ENCODE measurements at regions of chr6 and their contacts with region 1.

Region 1: GRCh38 chr6:125790358-125791150 is at the start of gene NCOA7:
- DNase-seq: peak; percentile 60 to 85 (median 76)
- ATAC-seq: peak; percentile 84 to 89 (median 86)
- H3K4me3 ChIP-seq: peak within 1 kb of the TSS; percentile 83 to 85
- H3K4me3 Mint-ChIP-seq: peak within 1 kb of the TSS; percentile 90 to 95 (median 93)
- H3K27ac ChIP-seq: peak within 1 kb of the TSS; percentile 93
- H3K27ac Mint-ChIP-seq: peak within 1 kb of the TSS; percentile 99
- H3K4me1 ChIP-seq: peaks cover 15 to 21% of the 10 kb centered on the region in 2 experiments
- H3K4me1 Mint-ChIP-seq: peaks cover 56 to 59% (median 58%) of the 10 kb centered on the region in 3 donors
- H3K27me3 ChIP-seq: no peaks in the 10 kb centered on the region
- H3K27me3 Mint-ChIP-seq: no peaks in the 10 kb centered on the region
- total RNA-seq, gene NCOA7: 40.3 to 51.6 (median 46.4) TPM

Region 2: GRCh38 chr6:125678601-125679000 is 112.0 kb before region 1 on chr6:
- CTCF ChIA-PET with region 1: no interaction called
- POLR2A ChIA-PET with region 1: no interaction called
- DNase-seq: no peak
- ATAC-seq: no peak
- H3K4me3 ChIP-seq: no peak overlapping the region
- H3K4me3 Mint-ChIP-seq: no peak overlapping the region
- H3K27ac ChIP-seq: no peak overlapping the region
- H3K27ac Mint-ChIP-seq: no peak overlapping the region
- H3K4me1 ChIP-seq: peaks cover 0 to 11% of the 10 kb centered on the region in 2 experiments
- H3K4me1 Mint-ChIP-seq: peaks cover 8 to 10% (median 9%) of the 10 kb centered on the region in 3 donors
- H3K27me3 ChIP-seq: peaks cover 0 to 3% of the 10 kb centered on the region in 2 experiments
- H3K27me3 Mint-ChIP-seq: peaks cover 28 to 36% of the 10 kb centered on the region in 2 donors

Region 3: DNA sequence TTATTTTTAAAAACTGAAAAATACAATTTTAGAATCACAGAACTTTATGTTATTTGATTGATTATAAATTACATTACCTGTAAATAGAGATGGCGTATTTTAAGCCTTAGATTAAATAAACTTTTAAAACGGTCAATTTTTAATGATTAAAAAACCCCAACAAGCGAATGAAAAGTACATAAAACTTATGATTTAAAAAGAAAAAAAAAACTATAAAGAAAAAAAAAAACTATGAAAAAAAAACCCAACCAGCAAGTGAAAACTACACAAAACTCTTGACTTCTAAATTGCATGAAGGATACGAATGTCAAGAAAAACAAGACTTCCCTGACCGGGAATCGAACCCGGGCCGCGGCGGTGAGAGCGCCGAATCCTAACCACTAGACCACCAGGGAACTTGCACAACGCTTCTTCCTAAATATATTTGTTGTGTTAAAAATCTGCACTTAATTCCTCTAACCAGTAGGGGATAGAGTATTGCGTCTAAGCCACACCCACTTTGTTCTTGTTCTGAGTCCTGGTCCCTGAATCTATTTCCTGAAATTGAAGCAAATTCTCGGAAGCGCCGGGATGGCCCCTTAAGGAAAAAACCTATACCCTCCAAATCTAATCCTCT is 10.5 kb before region 1 on chr6:
- CTCF ChIA-PET with region 1: interaction called, 18 to 97 read pairs
- POLR2A ChIA-PET with region 1: interaction called, 27 to 57 read pairs
- DNase-seq: peak; percentile 68 to 92 (median 83)
- ATAC-seq: peak; percentile 77 to 81 (median 78)
- H3K4me3 ChIP-seq: peak overlapping the region; percentile 70 to 84
- H3K4me3 Mint-ChIP-seq: no peak overlapping the region
- H3K27ac ChIP-seq: peak overlapping the region; percentile 93
- H3K27ac Mint-ChIP-seq: no peak overlapping the region
- H3K4me1 ChIP-seq: peaks cover 3 to 10% of the 10 kb centered on the region in 2 experiments
- H3K4me1 Mint-ChIP-seq: peaks cover 15 to 25% (median 17%) of the 10 kb centered on the region in 3 donors
- H3K27me3 ChIP-seq: no peaks in the 10 kb centered on the region
- H3K27me3 Mint-ChIP-seq: peaks cover 0 to 2% of the 10 kb centered on the region in 2 donors

Region 4: DNA sequence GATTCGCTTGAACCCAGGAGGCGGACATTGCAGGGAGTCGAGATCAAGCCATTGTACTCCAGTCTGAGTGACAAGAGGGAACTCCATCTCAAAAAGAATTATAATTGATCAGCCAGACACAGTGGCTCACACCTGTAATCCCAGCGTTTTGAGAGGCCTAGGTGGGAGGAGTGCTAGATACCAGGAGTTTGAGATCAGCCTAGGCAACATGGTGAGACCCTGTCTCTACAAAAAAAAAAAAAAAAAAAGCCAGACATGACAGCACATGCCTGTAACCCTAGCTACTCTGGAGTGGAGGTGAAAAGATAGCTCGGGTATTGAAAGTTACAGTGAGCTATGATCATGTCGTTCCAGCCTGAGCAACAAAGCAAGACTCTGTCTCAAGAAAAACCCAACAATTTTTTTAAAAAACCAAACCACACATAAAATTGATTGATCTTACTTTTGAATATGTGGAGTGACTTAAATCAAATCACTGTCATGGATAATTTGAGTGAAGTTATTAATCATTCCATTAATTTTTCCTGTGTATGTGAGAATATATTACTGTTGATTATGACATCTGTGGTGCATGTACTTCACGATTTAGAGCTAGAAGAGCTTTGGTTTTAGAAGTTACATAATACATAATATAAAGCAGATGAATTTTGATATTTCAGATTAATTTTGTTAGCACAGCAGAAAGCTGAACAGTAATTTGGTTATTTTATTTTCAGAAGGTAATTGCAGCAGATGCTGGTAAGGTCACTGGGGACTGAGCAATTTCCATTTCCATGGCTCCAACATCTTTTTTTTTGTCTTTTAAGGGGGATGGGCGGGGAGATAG is 34.6 kb after region 1 on chr6:
- CTCF ChIA-PET with region 1: interaction called in 1 of 2 experiments, 12 read pairs
- POLR2A ChIA-PET with region 1: interaction called in 1 of 2 experiments, 3 read pairs
- DNase-seq: no peak
- ATAC-seq: no peak
- H3K4me3 ChIP-seq: no peak overlapping the region
- H3K4me3 Mint-ChIP-seq: no peak overlapping the region
- H3K27ac ChIP-seq: no peak overlapping the region
- H3K27ac Mint-ChIP-seq: peak overlapping the region; percentile 57 to 64
- H3K4me1 ChIP-seq: peaks cover 10 to 18% of the 10 kb centered on the region in 2 experiments
- H3K4me1 Mint-ChIP-seq: peaks cover 44 to 66% (median 59%) of the 10 kb centered on the region in 3 donors
- H3K27me3 ChIP-seq: no peaks in the 10 kb centered on the region
- H3K27me3 Mint-ChIP-seq: no peaks in the 10 kb centered on the region

Region 5: DNA sequence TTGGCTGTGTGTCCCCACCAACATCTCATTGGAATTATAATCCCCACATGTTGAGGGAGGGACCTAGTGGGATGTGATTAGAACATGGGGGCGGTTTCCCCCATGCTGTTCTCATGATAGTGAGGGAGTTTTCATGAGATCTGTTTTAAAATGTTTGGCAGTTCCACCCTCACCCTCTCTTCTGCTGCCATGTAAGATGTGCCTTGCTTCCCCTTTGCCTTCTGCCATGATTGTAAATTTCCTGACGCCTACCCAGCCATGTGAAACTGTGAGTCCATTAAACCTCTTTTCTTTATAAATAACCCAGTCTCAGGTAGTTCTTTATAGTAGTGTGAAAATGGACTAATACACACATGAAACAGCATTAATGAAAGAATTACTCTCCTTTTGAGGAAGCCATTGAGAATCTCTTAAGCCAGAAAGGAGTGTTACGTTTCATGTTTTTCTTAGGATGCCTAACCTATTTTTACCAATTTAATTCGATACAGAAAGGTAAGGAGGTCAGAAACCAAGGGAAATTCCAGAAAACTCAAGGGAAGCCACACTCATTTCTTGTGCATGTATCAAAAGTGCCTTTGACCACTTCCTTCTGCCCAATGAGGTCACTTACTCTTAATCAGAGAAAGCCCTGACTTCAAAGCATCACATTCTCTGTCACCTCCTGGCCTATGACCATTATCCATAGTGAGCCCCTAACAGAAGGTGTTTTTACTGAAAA is 141.3 kb after region 1 on chr6:
- CTCF ChIA-PET with region 1: no interaction called
- POLR2A ChIA-PET with region 1: interaction called in 1 of 2 experiments, 10 read pairs
- DNase-seq: no peak
- ATAC-seq: no peak
- H3K4me3 ChIP-seq: no peak overlapping the region
- H3K4me3 Mint-ChIP-seq: no peak overlapping the region
- H3K27ac ChIP-seq: no peak overlapping the region
- H3K27ac Mint-ChIP-seq: no peak overlapping the region
- H3K4me1 ChIP-seq: no peaks in the 10 kb centered on the region
- H3K4me1 Mint-ChIP-seq: no peaks in the 10 kb centered on the region
- H3K27me3 ChIP-seq: no peaks in the 10 kb centered on the region
- H3K27me3 Mint-ChIP-seq: no peaks in the 10 kb centered on the region

Measured in T-cell (primary cell).